ENCODE measurements at regions of chr16 and their contacts with region 1.

Region 1: GRCh38 chr16:50368410-50369132 is at the start of gene BRD7:
- DNase-seq: peak; percentile 60 to 87 (median 72)
- ATAC-seq: peak; percentile 97
- H3K4me3 ChIP-seq: peak within 1 kb of the TSS; percentile 97
- H3K4me1 ChIP-seq: no peaks in the 10 kb centered on the region
- CTCF ChIP-seq: no peak
- total RNA-seq, gene BRD7: 50.8 to 79.6 (median 56.1) TPM

Region 2: GRCh38 chr16:50065624-50066481 is 302.7 kb before region 1 on chr16 and contains the start of gene HEATR3:
- intact Hi-C with region 1: loop called in 1 of 2 experiments (anchors 5 kb)
- DNase-seq: peak; percentile 95 to 99 (median 96)
- ATAC-seq: peak; percentile 96
- H3K4me3 ChIP-seq: peak within 1 kb of the TSS; percentile 82
- H3K4me1 ChIP-seq: peaks cover 8% of the 10 kb centered on the region
- CTCF ChIP-seq: no peak
- total RNA-seq, gene HEATR3: 19.1 to 24.1 (median 22.1) TPM

Region 3: GRCh38 chr16:50665128-50665878 is 296.7 kb after region 1 on chr16:
- intact Hi-C with region 1: loop called (anchors 10 kb)
- DNase-seq: peak; percentile 75 to 89 (median 85)
- ATAC-seq: peak; percentile 84
- H3K4me3 ChIP-seq: no peak overlapping the region
- H3K4me1 ChIP-seq: no peaks in the 10 kb centered on the region
- CTCF ChIP-seq: peak; percentile 85